ENCODE measurements at regions of chr7 and their contacts with region 1.

Region 1: DNA sequence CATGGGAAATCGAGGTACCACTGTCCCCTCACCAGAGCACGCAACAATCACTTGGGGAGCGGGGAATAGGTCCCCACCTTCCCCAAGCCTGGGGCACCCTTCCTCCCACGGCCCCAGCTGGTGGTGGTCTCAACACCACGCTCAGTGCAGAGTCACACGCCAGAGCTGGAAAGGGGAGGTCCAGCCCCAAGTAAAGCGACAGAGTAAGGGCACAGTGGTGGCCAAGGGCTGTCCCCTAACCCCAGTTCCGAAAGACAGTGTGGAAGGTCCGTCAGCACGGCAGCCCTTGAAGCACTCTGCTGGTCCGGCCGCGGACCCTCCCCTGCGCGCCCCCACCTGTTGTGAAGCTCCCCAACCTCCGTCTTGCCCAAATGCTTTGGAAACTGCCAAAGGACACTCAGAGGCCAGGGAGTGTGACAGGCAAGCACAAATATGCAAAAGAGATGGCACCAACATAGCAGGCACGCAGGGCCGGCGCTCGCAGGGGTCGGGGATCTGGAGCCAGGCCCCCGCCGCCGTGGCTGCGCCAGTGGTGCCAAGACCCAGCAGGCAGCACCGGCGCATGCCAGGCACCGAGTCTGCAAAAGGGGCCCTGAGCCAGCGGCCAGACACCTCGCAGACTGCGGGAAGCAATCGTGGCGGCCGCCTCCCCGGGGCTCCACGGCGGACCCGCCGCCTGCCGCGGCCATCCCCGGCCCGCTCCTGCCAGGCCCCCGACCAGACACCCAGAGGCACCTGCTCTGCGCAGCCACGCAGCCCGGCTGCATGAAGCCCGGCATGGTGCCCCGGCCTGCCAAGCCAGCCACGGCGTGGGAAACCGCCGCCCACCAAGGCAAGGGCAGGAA is 51.6 kb upstream of the SRRM3 start:
- DNase-seq: no peak
- H3K4me3 ChIP-seq: peak overlapping the region in 1 of 4 donors; percentile 14
- H3K27ac ChIP-seq: no peak overlapping the region
- H3K4me1 ChIP-seq: peaks cover 0 to 7% (median 7%) of the 10 kb centered on the region in 3 donors
- H3K27me3 ChIP-seq: peaks cover 0 to 17% (median 0%) of the 10 kb centered on the region in 4 donors
- CTCF ChIP-seq: no peak
- POLR2A ChIP-seq: no peak

Region 2: GRCh38 chr7:76069238-76069638 is 80.8 kb before region 1 on chr7:
- intact Hi-C with region 1: loop called (anchors 10 kb)
- DNase-seq: no peak
- H3K4me3 ChIP-seq: no peak overlapping the region
- H3K27ac ChIP-seq: peak overlapping the region in 3 of 4 donors; percentile 30 to 75 (median 71)
- H3K4me1 ChIP-seq: peaks cover 8 to 35% (median 8%) of the 10 kb centered on the region in 3 donors
- H3K27me3 ChIP-seq: no peaks in the 10 kb centered on the region
- CTCF ChIP-seq: peak in 4 of 6 experiments; percentile 30 to 77 (median 64)
- POLR2A ChIP-seq: no peak